ENCODE measurements at regions of chr10 and their contacts with region 1.

Region 1: DNA sequence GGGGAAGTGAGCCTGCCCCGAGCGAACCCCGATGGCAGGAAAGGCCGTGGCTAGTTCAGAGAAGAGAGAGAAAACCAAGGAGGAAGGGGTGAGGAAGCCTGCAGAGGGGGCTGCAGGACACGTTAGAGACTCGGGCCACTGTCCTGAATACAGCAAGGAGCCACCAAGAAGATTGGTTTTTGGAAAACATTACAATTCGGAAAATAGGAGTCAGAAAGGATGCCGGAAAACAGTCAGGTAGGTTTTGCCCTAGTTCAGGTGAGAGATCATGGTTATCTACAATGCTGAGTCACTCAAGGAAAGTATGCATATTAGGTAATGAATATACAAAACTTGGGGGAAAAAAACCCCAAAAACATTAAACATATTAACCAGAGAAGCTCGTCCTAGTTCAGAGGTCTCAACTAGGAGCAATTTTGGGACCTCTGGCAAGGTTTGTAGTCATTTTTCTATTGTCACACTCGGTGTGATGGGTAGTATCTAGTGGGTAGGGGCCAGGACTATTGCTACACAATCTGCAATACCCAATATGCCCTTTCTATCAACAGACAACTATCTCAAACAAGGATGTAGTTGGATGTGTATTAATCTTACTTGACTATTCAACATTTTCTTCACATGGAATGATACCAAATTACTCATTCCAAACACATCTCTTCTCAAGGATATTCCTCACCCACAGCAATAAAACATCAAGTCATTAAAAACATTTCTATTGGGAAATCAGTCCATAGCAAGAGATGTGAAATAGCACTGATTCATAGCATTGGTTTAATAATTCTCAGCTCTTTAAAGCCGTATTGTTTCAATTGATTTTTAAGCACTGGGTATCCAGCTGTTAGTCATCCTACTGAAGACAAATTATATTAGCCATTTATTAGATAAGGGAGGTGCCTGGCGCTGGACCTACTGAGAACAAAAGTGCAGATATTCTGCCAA is 74.4 kb upstream of the RSU1 start:
- DNase-seq: peak; percentile 85

Region 2: DNA sequence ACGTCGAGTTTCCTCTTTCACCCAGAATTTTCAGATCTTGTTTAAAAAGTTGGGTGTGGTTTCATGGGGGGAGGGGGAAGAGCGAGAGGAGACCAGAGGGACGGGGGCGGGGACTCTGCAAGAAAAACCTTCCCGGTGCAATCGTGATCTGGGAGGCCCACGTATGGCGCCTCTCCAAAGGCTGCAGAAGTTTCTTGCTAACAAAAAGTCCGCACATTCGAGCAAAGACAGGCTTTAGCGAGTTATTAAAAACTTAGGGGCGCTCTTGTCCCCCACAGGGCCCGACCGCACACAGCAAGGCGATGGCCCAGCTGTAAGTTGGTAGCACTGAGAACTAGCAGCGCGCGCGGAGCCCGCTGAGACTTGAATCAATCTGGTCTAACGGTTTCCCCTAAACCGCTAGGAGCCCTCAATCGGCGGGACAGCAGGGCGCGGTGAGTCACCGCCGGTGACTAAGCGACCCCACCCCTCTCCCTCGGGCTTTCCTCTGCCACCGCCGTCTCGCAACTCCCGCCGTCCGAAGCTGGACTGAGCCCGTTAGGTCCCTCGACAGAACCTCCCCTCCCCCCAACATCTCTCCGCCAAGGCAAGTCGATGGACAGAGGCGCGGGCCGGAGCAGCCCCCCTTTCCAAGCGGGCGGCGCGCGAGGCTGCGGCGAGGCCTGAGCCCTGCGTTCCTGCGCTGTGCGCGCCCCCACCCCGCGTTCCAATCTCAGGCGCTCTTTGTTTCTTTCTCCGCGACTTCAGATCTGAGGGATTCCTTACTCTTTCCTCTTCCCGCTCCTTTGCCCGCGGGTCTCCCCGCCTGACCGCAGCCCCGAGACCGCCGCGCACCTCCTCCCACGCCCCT is 336.7 kb after region 1 on chr10 and contains the start of gene VIM:
- in situ Hi-C with region 1: loop called (anchors 25 kb)
- DNase-seq: peak; percentile 92